Mammary epithelial cell (primary cell): ENCODE measurements at regions of chr2 and their contacts with region 1.

Region 1: GRCh38 chr2:168758970-168759820 is 43.2 kb upstream of the NOSTRIN start:
- DNase-seq: peak; percentile 45
- H3K4me3 ChIP-seq: no peak overlapping the region
- H3K27ac ChIP-seq: no peak overlapping the region
- H3K4me1 ChIP-seq: no peaks in the 10 kb centered on the region
- H3K27me3 ChIP-seq: no peaks in the 10 kb centered on the region
- CTCF ChIP-seq: peak; percentile 58 to 65

Region 2: DNA sequence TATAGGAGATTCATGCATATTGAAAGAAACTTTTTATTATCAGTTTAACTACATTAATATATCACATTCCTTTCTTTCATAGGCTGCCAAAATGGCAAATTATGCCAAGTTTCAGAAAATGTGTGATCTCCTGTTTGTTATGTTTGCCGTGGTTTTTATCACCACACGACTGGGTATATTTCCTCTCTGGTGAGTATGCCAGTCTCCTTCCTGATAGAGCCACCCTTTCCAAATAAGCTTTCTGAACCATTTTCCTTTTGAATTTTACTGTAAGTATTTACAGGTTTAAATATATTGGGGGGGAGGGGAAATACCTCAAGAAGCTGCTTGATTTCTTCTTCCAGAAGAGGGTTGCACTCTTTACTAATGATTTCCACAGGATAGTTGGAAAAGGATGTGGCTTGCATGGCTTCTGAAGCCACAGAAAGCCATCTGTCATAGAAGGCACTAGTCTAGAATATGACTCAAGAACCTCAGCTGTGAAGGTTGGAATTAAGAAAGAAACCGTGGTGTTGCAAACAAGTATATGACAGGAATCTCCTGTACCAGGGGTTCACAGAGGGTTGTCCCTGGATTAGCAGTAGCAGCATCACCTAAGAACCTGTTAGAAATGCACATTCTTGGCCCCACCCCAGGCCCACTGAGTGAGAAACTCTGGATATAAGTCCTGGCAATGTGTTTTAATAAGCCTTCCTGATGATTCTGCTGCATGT is 41.2 kb before region 1 on chr2:
- CTCF ChIA-PET with region 1: no interaction called
- dilution Hi-C with region 1: no loop called
- in situ Hi-C with region 1: no loop called
- intact Hi-C with region 1: loop called (anchors 5 kb)
- DNase-seq: peak; percentile 73
- H3K4me3 ChIP-seq: no peak overlapping the region
- H3K27ac ChIP-seq: peak overlapping the region; percentile 95
- H3K4me1 ChIP-seq: peaks cover 50% of the 10 kb centered on the region
- H3K27me3 ChIP-seq: no peaks in the 10 kb centered on the region
- CTCF ChIP-seq: no peak